Psoas muscle (tissue), 8 donors: ENCODE measurements at regions of chr1 and their contacts with region 1.

Region 1: DNA sequence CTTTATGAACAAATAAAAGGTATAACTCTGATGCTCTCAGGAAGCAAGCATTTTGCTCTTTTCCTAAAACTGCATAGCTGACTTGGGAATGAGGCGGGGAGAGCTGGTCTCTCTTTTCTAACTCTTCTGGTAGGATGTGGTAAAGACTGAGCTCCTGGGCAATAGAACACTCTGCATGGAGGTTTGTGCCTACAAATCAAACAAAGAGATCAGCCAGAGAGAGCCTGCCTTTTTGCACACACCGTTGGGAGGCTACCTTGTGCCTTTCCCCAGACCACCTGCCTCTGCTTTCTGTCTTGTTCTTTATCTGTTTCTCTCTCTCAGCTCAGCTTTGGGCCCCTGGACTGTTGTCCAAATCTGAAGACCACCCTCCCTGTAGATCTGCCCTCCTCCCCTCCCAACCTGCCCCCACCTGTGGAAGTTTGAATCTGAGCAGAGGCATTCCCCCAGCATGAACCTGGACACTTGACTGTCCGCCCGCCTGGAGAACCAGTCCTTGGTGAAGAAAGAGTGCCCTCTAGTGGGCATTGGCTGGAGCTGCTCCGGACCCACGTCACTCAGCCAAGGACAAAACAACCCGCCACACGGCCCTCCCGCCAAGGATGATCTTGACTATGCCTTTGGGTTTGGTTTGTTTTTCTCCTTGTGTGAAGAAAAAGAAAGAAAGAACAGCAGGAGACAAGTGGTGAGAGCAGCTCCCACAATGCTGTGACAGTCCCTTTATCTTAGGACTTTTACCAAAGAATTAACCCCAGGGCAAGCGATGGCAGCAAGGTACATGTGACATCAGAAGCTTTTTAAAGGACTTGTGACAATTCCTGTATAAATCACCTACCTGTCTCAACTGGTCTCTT is 228.2 kb downstream of the PBX1 start:
- DNase-seq: peak; percentile 83 to 91
- ATAC-seq: peak; percentile 89 to 94 (median 92)
- H3K4me3 ChIP-seq: peak overlapping the region; percentile 48
- H3K27ac ChIP-seq: peak overlapping the region; percentile 83
- H3K4me1 ChIP-seq: peaks cover 56% of the 10 kb centered on the region
- H3K27me3 ChIP-seq: no peaks in the 10 kb centered on the region
- CTCF ChIP-seq: peak; percentile 91

Region 2: DNA sequence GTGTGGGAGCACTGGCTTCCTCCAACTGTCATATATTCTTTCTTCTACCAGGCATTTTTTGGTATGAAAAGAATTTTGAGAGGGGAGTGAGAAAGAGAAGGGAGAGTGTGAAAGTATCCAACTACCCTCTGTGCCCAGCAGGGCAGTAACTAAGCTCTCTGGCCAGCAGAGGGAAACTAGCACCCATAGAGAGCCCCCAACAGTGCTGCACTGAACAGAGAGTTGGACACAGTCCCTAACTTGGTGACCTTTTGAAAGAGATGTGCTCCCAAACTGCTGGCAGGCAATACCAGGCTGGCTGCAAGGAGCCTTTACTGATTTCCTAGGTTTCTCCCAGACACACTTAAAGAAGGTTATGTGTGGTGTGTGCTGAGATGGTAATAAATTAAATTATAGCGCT is 347.0 kb before region 1 on chr1:
- intact Hi-C with region 1: loop called in 1 of 2 experiments (anchors 5 kb)
- DNase-seq: no peak
- ATAC-seq: peak; percentile 58 to 97 (median 77)
- H3K4me3 ChIP-seq: no peak overlapping the region
- H3K27ac ChIP-seq: no peak overlapping the region
- H3K4me1 ChIP-seq: peaks cover 9% of the 10 kb centered on the region
- H3K27me3 ChIP-seq: no peaks in the 10 kb centered on the region
- CTCF ChIP-seq: peak; percentile 46

Region 3: GRCh38 chr1:164565357-164565756 is 221.8 kb before region 1 on chr1:
- intact Hi-C with region 1: loop called (anchors 5 kb)
- DNase-seq: no peak
- ATAC-seq: peak in 1 of 4 donors; percentile 26
- H3K4me3 ChIP-seq: peak overlapping the region; percentile 85
- H3K27ac ChIP-seq: no peak overlapping the region
- H3K4me1 ChIP-seq: peaks cover 30% of the 10 kb centered on the region
- H3K27me3 ChIP-seq: no peaks in the 10 kb centered on the region
- CTCF ChIP-seq: no peak

Region 4: DNA sequence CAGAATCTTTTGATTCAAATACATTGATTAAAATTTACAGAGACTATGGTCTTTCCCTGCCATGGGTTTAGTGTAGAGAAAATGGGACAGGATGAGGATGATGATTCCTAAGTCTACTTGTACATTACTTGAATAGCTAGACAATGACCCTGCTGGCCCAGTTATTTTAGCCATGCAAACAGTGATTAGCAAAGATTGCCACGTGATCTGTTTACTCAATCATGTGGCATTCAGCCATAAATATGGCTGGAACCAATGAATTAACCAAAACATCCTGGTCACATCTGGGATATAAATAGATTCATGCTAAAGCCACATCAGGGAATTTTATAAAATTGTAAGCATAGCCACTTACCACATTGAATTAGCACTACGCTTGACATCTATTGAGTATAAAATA is 61.0 kb before region 1 on chr1:
- intact Hi-C with region 1: no loop called
- DNase-seq: no peak
- ATAC-seq: peak; percentile 19 to 75 (median 71)
- H3K4me3 ChIP-seq: no peak overlapping the region
- H3K27ac ChIP-seq: no peak overlapping the region
- H3K4me1 ChIP-seq: peaks cover 72% of the 10 kb centered on the region
- H3K27me3 ChIP-seq: no peaks in the 10 kb centered on the region
- CTCF ChIP-seq: no peak

Region 5: DNA sequence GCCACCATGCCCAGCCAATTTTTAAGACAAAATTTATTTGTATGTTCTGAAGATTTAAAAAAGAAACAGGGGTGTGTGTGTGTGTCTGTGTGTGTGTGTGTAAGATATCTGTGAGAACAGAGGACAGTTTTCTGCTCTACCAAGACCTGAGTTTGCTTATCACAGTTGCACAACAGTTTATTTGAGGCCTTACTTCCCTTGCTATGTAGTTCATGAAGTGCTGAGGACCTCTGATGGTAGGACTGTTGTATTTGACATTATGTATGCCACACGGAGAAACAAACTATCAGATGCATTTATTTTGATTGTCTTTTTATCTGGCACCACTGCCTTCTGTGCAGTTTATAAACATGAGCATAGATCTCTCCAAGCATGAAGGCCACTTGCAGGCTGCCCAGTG is 127.0 kb after region 1 on chr1:
- intact Hi-C with region 1: loop called in 1 of 2 experiments (anchors 5 kb)
- DNase-seq: no peak
- ATAC-seq: peak; percentile 78 to 89 (median 84)
- H3K4me3 ChIP-seq: no peak overlapping the region
- H3K27ac ChIP-seq: no peak overlapping the region
- H3K4me1 ChIP-seq: peaks cover 10% of the 10 kb centered on the region
- H3K27me3 ChIP-seq: no peaks in the 10 kb centered on the region
- CTCF ChIP-seq: peak; percentile 48